ENCODE measurements at regions of chr10 and their contacts with region 1.

Region 1: GRCh38 chr10:109978481-109978880 is 29.3 kb upstream of the ADD3 start:
- DNase-seq: peak; percentile 74
- ATAC-seq: peak; percentile 79
- H3K4me3 Mint-ChIP-seq: no peak overlapping the region
- H3K27ac Mint-ChIP-seq: no peak overlapping the region
- H3K4me1 Mint-ChIP-seq: peaks cover 39% of the 10 kb centered on the region
- H3K27me3 Mint-ChIP-seq: no peaks in the 10 kb centered on the region
- CTCF ChIP-seq: peak; percentile 80

Region 2: GRCh38 chr10:109934958-109935706 is 43.3 kb before region 1 on chr10:
- CTCF ChIA-PET with region 1: interaction called, 14 read pairs
- POLR2A ChIA-PET with region 1: interaction called, 5 read pairs
- DNase-seq: peak; percentile 59
- ATAC-seq: peak; percentile 96
- H3K4me3 Mint-ChIP-seq: peak overlapping the region; percentile 48
- H3K27ac Mint-ChIP-seq: peak overlapping the region; percentile 98
- H3K4me1 Mint-ChIP-seq: peaks cover 68% of the 10 kb centered on the region
- H3K27me3 Mint-ChIP-seq: 0 out of 2 replicates have a peak, but pooled peaks cover 4% of the 10 kb centered on the region
- CTCF ChIP-seq: no peak

Region 3: DNA sequence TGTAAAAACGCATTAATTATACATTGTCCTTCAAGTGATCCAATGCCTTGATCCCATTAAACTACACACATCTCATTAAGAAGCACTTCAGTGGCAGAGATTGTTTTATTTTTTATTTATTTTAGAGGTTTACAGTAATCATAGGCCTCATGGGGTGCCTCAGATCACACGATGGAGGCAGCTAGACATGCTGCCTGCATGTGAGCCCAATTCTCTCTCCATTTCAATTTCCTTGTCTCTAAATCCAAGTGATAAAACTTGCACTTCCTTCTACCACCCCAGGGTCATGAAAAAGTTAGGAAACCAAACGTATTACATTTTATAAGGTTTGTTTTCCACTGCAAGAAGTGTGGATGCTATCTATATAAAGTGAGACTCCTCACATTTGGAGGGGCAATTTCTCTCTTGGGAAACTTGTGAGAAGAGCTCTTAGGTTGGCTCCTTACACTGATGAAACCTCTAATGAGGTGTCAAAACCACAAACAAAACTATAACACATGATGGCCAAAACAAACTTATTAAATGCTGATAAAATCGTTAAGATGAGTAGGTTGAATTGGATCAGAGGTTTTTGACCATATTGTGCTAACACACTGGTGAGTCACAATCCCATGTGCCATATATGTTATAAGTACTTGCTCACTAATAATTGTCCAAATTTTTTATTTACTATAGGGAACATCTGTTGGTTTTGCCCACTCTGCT is 32.9 kb before region 1 on chr10:
- CTCF ChIA-PET with region 1: no interaction called
- POLR2A ChIA-PET with region 1: no interaction called
- DNase-seq: no peak
- ATAC-seq: no peak
- H3K4me3 Mint-ChIP-seq: no peak overlapping the region
- H3K27ac Mint-ChIP-seq: no peak overlapping the region
- H3K4me1 Mint-ChIP-seq: peaks cover 12% of the 10 kb centered on the region
- H3K27me3 Mint-ChIP-seq: peaks cover 2% of the 10 kb centered on the region; the same call in 1 of the 2 replicates
- CTCF ChIP-seq: no peak

Region 4: GRCh38 chr10:109956454-109957091 is 21.9 kb before region 1 on chr10:
- CTCF ChIA-PET with region 1: interaction called, 14 read pairs
- POLR2A ChIA-PET with region 1: no interaction called
- DNase-seq: peak; percentile 39
- ATAC-seq: peak; percentile 93
- H3K4me3 Mint-ChIP-seq: no peak overlapping the region
- H3K27ac Mint-ChIP-seq: no peak overlapping the region; the same call in 1 of the 2 replicates
- H3K4me1 Mint-ChIP-seq: peaks cover 49% of the 10 kb centered on the region
- H3K27me3 Mint-ChIP-seq: no peaks in the 10 kb centered on the region; the same call in 1 of the 2 replicates
- CTCF ChIP-seq: peak; percentile 83

Region 5: GRCh38 chr10:110007701-110008517 is 29.4 kb after region 1 on chr10 and contains the start of gene ADD3:
- CTCF ChIA-PET with region 1: interaction called, 12 read pairs
- POLR2A ChIA-PET with region 1: interaction called, 7 read pairs
- DNase-seq: peak; percentile 99
- ATAC-seq: peak; percentile 85
- H3K4me3 Mint-ChIP-seq: peak within 1 kb of the TSS; percentile 95
- H3K27ac Mint-ChIP-seq: peak within 1 kb of the TSS; percentile 90
- H3K4me1 Mint-ChIP-seq: peaks cover 58% of the 10 kb centered on the region
- H3K27me3 Mint-ChIP-seq: no peaks in the 10 kb centered on the region
- CTCF ChIP-seq: no peak
- total RNA-seq, gene ADD3: 86.7 to 95.7 TPM (median 88.3 TPM) in 3 replicates

Region 6: GRCh38 chr10:110016039-110016438 is 37.6 kb after region 1 on chr10:
- CTCF ChIA-PET with region 1: interaction called, 11 read pairs
- POLR2A ChIA-PET with region 1: no interaction called
- DNase-seq: no peak
- ATAC-seq: peak; percentile 85
- H3K4me3 Mint-ChIP-seq: no peak overlapping the region
- H3K27ac Mint-ChIP-seq: peak overlapping the region; percentile 75
- H3K4me1 Mint-ChIP-seq: peaks cover 48% of the 10 kb centered on the region
- H3K27me3 Mint-ChIP-seq: no peaks in the 10 kb centered on the region
- CTCF ChIP-seq: no peak

Region 7: DNA sequence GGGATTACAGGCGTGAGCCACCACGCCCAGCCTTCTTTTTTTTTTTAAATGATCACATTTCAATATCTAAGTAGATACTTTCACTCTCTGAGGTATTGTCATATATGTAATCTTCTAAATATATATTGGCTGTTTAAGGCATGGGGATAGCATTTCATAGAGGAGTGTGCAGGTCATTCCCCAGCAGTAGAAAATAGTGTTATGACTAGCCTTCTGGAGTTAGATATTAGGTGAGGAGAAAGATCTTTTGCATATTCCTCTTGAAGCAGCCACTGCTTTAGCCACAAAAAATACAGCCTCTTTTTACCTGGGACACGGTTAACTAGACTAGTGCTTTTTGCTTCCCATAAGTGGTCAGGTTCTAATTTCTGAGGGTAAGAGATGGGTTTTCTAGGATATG is 58.2 kb after region 1 on chr10:
- CTCF ChIA-PET with region 1: interaction called, 17 read pairs
- POLR2A ChIA-PET with region 1: no interaction called
- DNase-seq: no peak
- ATAC-seq: no peak
- H3K4me3 Mint-ChIP-seq: no peak overlapping the region
- H3K27ac Mint-ChIP-seq: no peak overlapping the region
- H3K4me1 Mint-ChIP-seq: peaks cover 57% of the 10 kb centered on the region
- H3K27me3 Mint-ChIP-seq: no peaks in the 10 kb centered on the region
- CTCF ChIP-seq: no peak

Measured in WTC11 (cell line).